Psoas muscle (tissue), 8 donors: ENCODE measurements at regions of chr11 and their contacts with region 1.

Region 1: DNA sequence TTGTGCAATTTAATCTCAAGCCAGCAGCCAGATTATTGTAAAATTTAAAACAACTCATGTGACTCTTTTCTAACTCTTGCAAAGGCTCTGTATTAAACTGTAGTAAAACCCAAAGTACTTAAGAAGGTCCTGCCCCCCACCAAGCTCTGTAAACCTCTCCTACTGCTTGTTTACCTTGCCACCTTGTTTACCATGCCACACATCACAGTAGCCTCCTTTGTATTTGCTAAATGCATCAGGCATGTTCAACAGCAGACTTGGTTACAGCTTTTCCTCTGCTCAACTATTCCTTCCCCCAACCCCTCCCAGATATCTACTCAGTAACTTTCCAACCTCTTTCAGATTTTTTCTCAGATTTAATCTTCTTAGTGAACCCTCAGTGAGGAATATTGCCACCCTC is 861.6 kb downstream of the METTL15 start:
- DNase-seq: no peak
- ATAC-seq: no peak
- H3K4me3 ChIP-seq: no peak overlapping the region
- H3K27ac ChIP-seq: no peak overlapping the region
- H3K4me1 ChIP-seq: no peaks in the 10 kb centered on the region
- H3K27me3 ChIP-seq: no peaks in the 10 kb centered on the region
- CTCF ChIP-seq: no peak

Region 2: GRCh38 chr11:28730336-28730735 is 239.5 kb before region 1 on chr11:
- intact Hi-C with region 1: no loop called
- DNase-seq: no peak
- ATAC-seq: no peak
- H3K4me3 ChIP-seq: no peak overlapping the region
- H3K27ac ChIP-seq: no peak overlapping the region
- H3K4me1 ChIP-seq: no peaks in the 10 kb centered on the region
- H3K27me3 ChIP-seq: no peaks in the 10 kb centered on the region
- CTCF ChIP-seq: no peak

Region 3: DNA sequence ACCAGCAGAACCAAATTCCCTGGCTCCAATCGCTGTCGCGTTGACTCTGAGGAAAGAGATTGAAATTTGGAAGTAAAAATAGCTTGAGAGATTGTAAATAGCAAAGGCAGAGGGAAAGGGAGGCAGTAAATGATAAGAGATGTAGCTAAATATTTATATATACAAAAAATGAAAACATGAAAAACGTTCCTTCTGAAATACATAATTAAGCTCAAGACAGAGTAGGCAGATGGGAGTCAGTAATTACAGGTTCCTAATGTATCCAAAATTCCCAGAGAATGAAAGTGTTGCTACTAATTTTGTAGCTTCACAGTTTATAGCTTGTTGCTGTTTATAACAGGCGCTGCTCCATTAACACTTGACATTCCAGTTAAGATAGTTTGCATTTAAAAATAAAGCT is 398.3 kb after region 1 on chr11:
- intact Hi-C with region 1: loop called in 1 of 2 experiments (anchors 5 kb)
- DNase-seq: no peak
- ATAC-seq: no peak
- H3K4me3 ChIP-seq: no peak overlapping the region
- H3K27ac ChIP-seq: no peak overlapping the region
- H3K4me1 ChIP-seq: no peaks in the 10 kb centered on the region
- H3K27me3 ChIP-seq: no peaks in the 10 kb centered on the region
- CTCF ChIP-seq: no peak